ENCODE measurements at regions of chr12 and their contacts with region 1.

Region 1: DNA sequence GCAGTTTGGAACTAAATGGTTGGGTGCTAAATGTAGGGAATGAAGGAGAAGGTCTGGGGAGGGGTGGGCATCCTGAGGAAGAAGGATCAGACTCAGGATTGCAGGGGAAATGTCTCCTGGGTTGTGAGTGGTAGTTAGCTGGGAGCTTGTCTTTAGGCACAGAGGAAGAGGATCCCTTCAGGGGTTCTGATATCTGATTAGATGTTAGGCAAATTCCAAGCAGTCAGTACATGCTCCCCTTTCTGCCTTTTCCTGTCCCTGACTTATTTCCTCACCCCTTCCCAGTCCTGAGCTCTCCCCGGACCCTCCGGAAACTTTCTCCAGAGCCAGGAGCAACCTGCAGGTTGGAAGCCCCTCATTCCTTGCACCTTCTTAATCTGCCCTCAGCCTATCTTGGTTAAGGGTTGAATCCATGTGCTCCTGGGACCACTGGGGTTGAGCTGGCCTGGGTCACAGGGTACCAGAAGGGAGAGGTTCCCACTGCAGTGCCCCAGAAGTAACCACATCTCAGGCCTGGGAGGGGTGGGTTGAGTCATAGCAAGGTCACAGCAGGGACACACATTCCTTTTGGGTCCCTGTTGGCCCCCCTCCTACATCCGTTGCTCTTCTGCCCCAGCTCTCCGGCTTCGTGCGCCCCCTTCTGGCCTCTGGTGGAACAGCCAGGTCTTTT is 1.6 kb downstream of the IGFBP6 start:
- DNase-seq: peak; percentile 67 to 91 (median 84)
- ATAC-seq: peak; percentile 50 to 59 (median 58)
- H3K4me3 ChIP-seq: no peak overlapping the region
- H3K4me3 Mint-ChIP-seq: peak overlapping the region; percentile 45 to 79 (median 55)
- H3K27ac ChIP-seq: peak overlapping the region; percentile 52
- H3K27ac Mint-ChIP-seq: peak overlapping the region; percentile 67 to 88
- H3K4me1 ChIP-seq: peaks cover 29 to 61% of the 10 kb centered on the region in 2 experiments
- H3K4me1 Mint-ChIP-seq: peaks cover 52 to 56% (median 52%) of the 10 kb centered on the region in 3 donors
- H3K27me3 ChIP-seq: peaks cover 0 to 16% of the 10 kb centered on the region in 2 experiments
- H3K27me3 Mint-ChIP-seq: peaks cover 0 to 6% of the 10 kb centered on the region in 2 donors

Region 2: GRCh38 chr12:51505360-51506105 is 1593.6 kb before region 1 on chr12:
- CTCF ChIA-PET with region 1: no interaction called
- POLR2A ChIA-PET with region 1: no interaction called
- DNase-seq: no peak
- ATAC-seq: no peak
- H3K4me3 ChIP-seq: no peak overlapping the region
- H3K4me3 Mint-ChIP-seq: no peak overlapping the region
- H3K27ac ChIP-seq: no peak overlapping the region
- H3K27ac Mint-ChIP-seq: no peak overlapping the region
- H3K4me1 ChIP-seq: no peaks in the 10 kb centered on the region
- H3K4me1 Mint-ChIP-seq: no peaks in the 10 kb centered on the region
- H3K27me3 ChIP-seq: no peaks in the 10 kb centered on the region
- H3K27me3 Mint-ChIP-seq: no peaks in the 10 kb centered on the region

Region 3: DNA sequence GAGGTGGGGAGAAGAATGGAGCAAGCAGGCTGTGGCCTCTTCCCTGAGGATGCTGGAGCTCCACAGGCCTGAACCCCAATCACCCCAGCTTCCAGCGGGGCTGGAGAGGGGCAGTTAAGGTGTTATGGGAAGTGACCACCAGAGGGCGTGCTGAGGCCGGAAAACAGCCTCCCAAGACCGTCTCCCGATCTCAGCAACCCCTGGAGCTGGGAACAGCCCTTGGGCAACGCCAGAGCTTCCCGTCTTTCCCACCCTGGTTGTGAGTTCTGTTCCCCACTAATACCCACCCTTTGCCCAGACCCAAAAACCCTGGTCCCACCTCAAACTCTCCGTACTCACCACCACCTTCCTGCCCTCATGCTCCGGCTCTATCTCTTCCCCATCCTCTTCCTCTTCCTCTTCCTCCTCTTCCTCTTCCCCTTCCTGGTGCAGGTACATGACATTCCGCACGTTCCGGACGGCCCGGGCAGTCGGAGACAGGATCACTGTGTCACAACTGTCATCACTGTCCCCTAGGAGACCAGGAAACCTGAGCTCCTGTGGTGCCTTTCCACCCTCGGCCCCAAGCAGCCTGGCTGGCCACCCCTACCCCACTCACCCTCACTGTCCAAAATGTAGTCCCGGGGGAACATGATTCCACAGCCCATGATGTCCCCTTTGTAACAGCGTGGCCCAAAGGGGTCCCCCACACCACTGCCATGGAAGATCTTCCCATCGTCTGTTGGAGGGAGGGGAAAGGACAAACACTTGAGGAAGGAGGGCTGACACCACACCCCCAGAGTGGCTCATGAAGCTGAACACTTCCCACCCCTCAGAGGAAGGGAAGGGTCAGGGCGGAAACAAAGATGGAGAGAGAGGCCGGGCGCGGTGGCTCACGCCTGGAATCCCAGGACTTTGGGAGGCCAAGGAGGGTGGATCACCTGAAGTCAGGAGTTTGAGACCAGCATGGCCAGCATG is 32.9 kb before region 1 on chr12:
- CTCF ChIA-PET with region 1: interaction called, 15 to 25 read pairs
- POLR2A ChIA-PET with region 1: no interaction called
- DNase-seq: peak in 29 of 35 experiments; percentile 23 to 84 (median 54)
- ATAC-seq: peak; percentile 60 to 79 (median 67)
- H3K4me3 ChIP-seq: no peak overlapping the region
- H3K4me3 Mint-ChIP-seq: no peak overlapping the region
- H3K27ac ChIP-seq: no peak overlapping the region
- H3K27ac Mint-ChIP-seq: peak overlapping the region in 1 of 2 donors; percentile 64
- H3K4me1 ChIP-seq: peaks cover 0 to 5% of the 10 kb centered on the region in 2 experiments
- H3K4me1 Mint-ChIP-seq: peaks cover 10 to 13% (median 12%) of the 10 kb centered on the region in 3 donors
- H3K27me3 ChIP-seq: no peaks in the 10 kb centered on the region
- H3K27me3 Mint-ChIP-seq: no peaks in the 10 kb centered on the region

Region 4: GRCh38 chr12:53079226-53080117 is 19.6 kb before region 1 on chr12 and contains the start of gene SPRYD3:
- CTCF ChIA-PET with region 1: interaction called in 1 of 2 experiments, 32 read pairs
- POLR2A ChIA-PET with region 1: interaction called, 3 to 8 read pairs
- DNase-seq: peak; percentile 90 to 99 (median 95)
- ATAC-seq: peak; percentile 96 to 98 (median 96)
- H3K4me3 ChIP-seq: peak within 1 kb of the TSS; percentile 74 to 90
- H3K4me3 Mint-ChIP-seq: peak within 1 kb of the TSS; percentile 89 to 90 (median 90)
- H3K27ac ChIP-seq: peak within 1 kb of the TSS; percentile 75
- H3K27ac Mint-ChIP-seq: peak within 1 kb of the TSS; percentile 91 to 97
- H3K4me1 ChIP-seq: peaks cover 5 to 36% of the 10 kb centered on the region in 2 experiments
- H3K4me1 Mint-ChIP-seq: peaks cover 46 to 57% (median 47%) of the 10 kb centered on the region in 3 donors
- H3K27me3 ChIP-seq: peaks cover 0 to 7% of the 10 kb centered on the region in 2 experiments
- H3K27me3 Mint-ChIP-seq: no peaks in the 10 kb centered on the region
- total RNA-seq, gene SPRYD3: 29.3 to 65.0 (median 58.2) TPM

Region 5: DNA sequence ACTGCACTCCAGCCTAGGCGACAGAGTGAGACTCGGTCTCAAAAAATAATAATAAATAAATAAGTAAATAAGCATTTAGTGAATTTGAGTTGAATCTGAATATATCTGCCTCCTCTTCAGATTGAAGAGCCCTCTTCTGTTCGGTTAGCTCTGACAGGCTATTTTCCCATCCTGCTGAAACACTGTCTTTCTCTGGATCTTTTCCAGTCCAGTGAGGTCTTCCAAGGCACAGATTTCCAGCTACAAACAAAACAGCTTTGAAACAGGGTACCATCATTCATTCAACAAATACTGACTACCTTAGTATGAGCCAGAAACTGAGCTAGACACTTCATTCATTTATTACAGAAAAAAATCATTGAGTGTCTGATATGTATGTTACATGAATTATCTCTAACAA is 12.8 kb before region 1 on chr12:
- CTCF ChIA-PET with region 1: interaction called in 1 of 2 experiments, 11 read pairs
- POLR2A ChIA-PET with region 1: no interaction called
- DNase-seq: no peak
- ATAC-seq: no peak
- H3K4me3 ChIP-seq: no peak overlapping the region
- H3K4me3 Mint-ChIP-seq: no peak overlapping the region
- H3K27ac ChIP-seq: no peak overlapping the region
- H3K27ac Mint-ChIP-seq: no peak overlapping the region
- H3K4me1 ChIP-seq: no peaks in the 10 kb centered on the region
- H3K4me1 Mint-ChIP-seq: no peaks in the 10 kb centered on the region
- H3K27me3 ChIP-seq: peaks cover 0 to 13% of the 10 kb centered on the region in 2 experiments
- H3K27me3 Mint-ChIP-seq: peaks cover 0 to 11% of the 10 kb centered on the region in 2 donors